A673 (cell line): ENCODE measurements at regions of chr14 and their contacts with region 1.

Region 1: GRCh38 chr14:22986508-22987054 is 4.2 kb upstream of the AJUBA start:
- DNase-seq: peak; percentile 87
- H3K4me3 ChIP-seq: no peak overlapping the region
- H3K27ac ChIP-seq: no peak overlapping the region
- H3K4me1 ChIP-seq: no peaks in the 10 kb centered on the region
- H3K27me3 ChIP-seq: no peaks in the 10 kb centered on the region
- CTCF ChIP-seq: peak; percentile 91

Region 2: DNA sequence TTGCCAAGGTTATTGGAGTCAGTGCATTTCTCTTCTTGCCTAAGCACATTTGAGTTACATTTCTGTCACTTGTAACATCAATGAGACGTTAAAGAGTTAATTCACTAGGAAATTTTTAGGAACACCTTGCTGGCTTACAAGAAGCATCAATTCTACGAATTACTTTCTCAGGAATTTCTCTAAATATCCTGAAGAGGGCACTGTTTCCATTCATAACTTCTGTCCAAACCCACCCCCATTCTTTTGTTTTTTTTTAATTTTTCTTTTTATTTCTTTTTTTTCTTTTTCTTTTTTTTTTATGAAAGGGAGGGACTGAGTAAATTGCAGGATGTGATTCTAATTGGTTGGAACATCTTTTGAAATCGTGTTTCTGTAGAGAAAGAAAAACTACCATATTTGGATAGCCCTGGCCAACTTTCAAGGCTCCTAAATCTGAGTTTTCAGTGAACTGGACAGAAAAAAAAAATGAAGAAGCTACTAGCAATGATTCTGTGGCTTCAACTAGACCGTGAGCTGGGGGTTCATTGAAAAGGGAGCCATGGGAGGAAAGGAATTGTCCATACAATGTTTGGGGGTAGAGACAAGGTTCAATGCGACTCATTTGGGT is 682.9 kb before region 1 on chr14:
- CTCF ChIA-PET with region 1: no interaction called
- POLR2A ChIA-PET with region 1: no interaction called
- intact Hi-C with region 1: loop called (anchors 5 kb)
- DNase-seq: peak; percentile 63
- H3K4me3 ChIP-seq: peak overlapping the region; percentile 15
- H3K27ac ChIP-seq: peak overlapping the region; percentile 78
- H3K4me1 ChIP-seq: peaks cover 29% of the 10 kb centered on the region
- H3K27me3 ChIP-seq: no peaks in the 10 kb centered on the region
- CTCF ChIP-seq: peak; percentile 74

Region 3: GRCh38 chr14:22822571-22823098 is 163.9 kb before region 1 on chr14:
- CTCF ChIA-PET with region 1: interaction called, 7 read pairs
- POLR2A ChIA-PET with region 1: no interaction called
- intact Hi-C with region 1: loop called (anchors 5 kb)
- DNase-seq: peak; percentile 93
- H3K4me3 ChIP-seq: peak overlapping the region; percentile 29
- H3K27ac ChIP-seq: peak overlapping the region; percentile 8
- H3K4me1 ChIP-seq: peaks cover 25% of the 10 kb centered on the region
- H3K27me3 ChIP-seq: no peaks in the 10 kb centered on the region
- CTCF ChIP-seq: peak; percentile 93

Region 4: GRCh38 chr14:23006544-23007419 is 20.2 kb after region 1 on chr14:
- CTCF ChIA-PET with region 1: interaction called, 12 read pairs
- POLR2A ChIA-PET with region 1: no interaction called
- intact Hi-C with region 1: loop called (anchors 1 kb)
- DNase-seq: peak; percentile 99
- H3K4me3 ChIP-seq: peak overlapping the region; percentile 55
- H3K27ac ChIP-seq: peak overlapping the region; percentile 91
- H3K4me1 ChIP-seq: peaks cover 30% of the 10 kb centered on the region
- H3K27me3 ChIP-seq: no peaks in the 10 kb centered on the region
- CTCF ChIP-seq: 0 out of 2 replicates have a peak, but pooled peaks have one; percentile 32

Region 5: GRCh38 chr14:23068476-23069412 is 82.2 kb after region 1 on chr14:
- CTCF ChIA-PET with region 1: interaction called, 22 read pairs
- POLR2A ChIA-PET with region 1: no interaction called
- intact Hi-C with region 1: no loop called
- DNase-seq: peak; percentile 95
- H3K4me3 ChIP-seq: peak overlapping the region; percentile 5
- H3K27ac ChIP-seq: peak overlapping the region; percentile 57
- H3K4me1 ChIP-seq: peaks cover 38% of the 10 kb centered on the region
- H3K27me3 ChIP-seq: no peaks in the 10 kb centered on the region
- CTCF ChIP-seq: peak; percentile 100